ENCODE measurements at regions of chr2 and their contacts with region 1.

Region 1: GRCh38 chr2:28751252-28751955 is at the start of gene PPP1CB:
- DNase-seq: peak; percentile 95 to 99 (median 99)
- ATAC-seq: peak; percentile 92
- H3K4me3 ChIP-seq: peak within 1 kb of the TSS; percentile 97
- H3K4me3 Mint-ChIP-seq: peak within 1 kb of the TSS; percentile 93 to 100 (median 96)
- H3K27ac ChIP-seq: peak within 1 kb of the TSS; percentile 99
- H3K27ac Mint-ChIP-seq: peak within 1 kb of the TSS; percentile 96 to 99 (median 98)
- H3K4me1 ChIP-seq: peaks cover 42 to 44% of the 10 kb centered on the region in 2 donors
- H3K4me1 Mint-ChIP-seq: peaks cover 35 to 67% (median 64%) of the 10 kb centered on the region in 7 donors
- H3K27me3 ChIP-seq: no peaks in the 10 kb centered on the region
- H3K27me3 Mint-ChIP-seq: no peaks in the 10 kb centered on the region
- total RNA-seq, gene PPP1CB: 202 to 223 (median 210) TPM

Region 2: DNA sequence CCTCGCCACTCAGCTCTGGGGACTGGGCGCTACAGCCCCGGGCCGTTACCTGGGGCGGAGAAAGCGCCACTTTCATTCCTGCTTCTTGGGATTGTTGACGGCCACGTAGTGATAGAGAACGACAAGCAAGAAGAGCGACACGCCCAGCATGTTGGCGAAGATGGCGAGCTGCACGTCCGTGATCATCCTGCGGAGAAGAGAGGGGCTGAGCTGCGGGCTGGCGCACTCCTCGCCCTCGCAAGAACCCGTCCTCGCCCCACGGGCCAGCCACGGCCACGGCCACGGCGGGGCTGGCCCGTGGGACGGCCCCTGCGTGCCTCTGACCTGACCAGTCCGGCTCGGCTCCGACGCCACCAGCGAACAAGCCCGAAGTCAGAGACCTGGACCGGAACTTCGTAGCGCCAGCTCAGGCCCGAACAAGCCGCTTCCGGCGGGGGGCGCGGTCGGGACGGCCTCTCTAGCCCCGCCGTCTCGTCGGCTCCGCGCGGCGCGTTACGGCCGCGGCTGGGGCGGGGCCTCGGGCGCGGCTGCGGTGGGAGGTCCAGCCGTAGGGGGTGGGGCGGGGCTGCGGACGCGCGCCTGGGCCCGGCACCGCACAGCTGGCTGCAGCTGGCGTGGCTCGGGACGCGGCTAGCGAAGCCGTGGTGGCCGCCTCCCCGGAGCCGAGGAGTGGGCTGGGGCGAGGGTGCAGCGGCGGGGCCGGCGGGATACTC is 1680.0 kb before region 1 on chr2 and contains the start of gene OST4:
- CTCF ChIA-PET with region 1: no interaction called
- POLR2A ChIA-PET with region 1: no interaction called
- intact Hi-C with region 1: loop called (anchors 5 to 10 kb)
- DNase-seq: peak; percentile 81 to 97 (median 87)
- ATAC-seq: peak; percentile 96
- H3K4me3 ChIP-seq: peak within 1 kb of the TSS; percentile 83
- H3K4me3 Mint-ChIP-seq: peak within 1 kb of the TSS; percentile 96 to 99 (median 97)
- H3K27ac ChIP-seq: peak within 1 kb of the TSS; percentile 97
- H3K27ac Mint-ChIP-seq: peak within 1 kb of the TSS; percentile 93 to 98 (median 97)
- H3K4me1 ChIP-seq: peaks cover 29 to 41% of the 10 kb centered on the region in 2 donors
- H3K4me1 Mint-ChIP-seq: peaks cover 57 to 86% (median 76%) of the 10 kb centered on the region in 7 donors
- H3K27me3 ChIP-seq: no peaks in the 10 kb centered on the region
- H3K27me3 Mint-ChIP-seq: no peaks in the 10 kb centered on the region
- total RNA-seq, gene OST4: 241 to 398 (median 263) TPM

Region 3: DNA sequence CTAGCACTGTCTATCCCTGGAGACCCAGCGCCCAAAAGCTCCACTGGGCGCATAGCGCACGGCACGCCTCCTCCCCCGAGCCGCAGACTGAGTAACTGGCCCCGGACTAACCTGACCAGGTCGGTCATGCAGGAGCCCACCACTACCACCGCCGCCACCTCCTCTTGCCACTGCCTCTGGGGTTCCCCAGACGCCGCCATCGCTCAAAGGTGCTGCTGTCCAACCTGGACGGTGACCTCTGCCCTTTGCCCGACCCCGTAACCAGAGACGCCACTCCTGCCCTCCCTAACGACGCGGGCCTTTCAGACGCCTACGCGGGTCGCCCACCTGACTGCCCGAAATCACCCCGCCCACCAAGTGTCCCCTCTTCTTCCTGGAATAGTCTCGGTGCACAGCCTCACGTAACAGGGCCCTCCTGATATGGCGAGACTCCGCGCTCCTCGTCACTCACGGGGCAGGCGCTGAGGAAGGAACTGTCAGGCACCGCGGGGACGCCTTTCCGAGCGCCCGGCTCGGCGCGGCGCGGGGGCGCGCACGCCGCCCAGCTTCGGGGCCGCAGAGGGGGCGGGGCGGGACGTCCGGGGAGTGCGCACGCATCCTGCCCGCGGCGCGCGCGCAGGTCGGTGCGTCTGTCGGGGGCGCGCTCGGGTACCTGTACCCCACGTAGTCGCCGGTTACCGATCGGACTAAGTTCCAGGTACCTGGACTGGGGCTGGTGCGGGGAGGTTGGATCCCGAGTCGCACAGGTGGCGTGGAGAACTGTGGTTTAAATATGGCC is 861.1 kb before region 1 on chr2 and contains the starts of genes BABAM2 and RBKS:
- CTCF ChIA-PET with region 1: no interaction called
- POLR2A ChIA-PET with region 1: no interaction called
- intact Hi-C with region 1: loop called in 1 of 2 experiments (anchors 2 kb)
- DNase-seq: peak; percentile 90 to 96 (median 94)
- ATAC-seq: peak; percentile 92
- H3K4me3 ChIP-seq: peak within 1 kb of the TSS; percentile 95
- H3K4me3 Mint-ChIP-seq: peak within 1 kb of the TSS; percentile 96 to 100 (median 98)
- H3K27ac ChIP-seq: peak within 1 kb of the TSS; percentile 99
- H3K27ac Mint-ChIP-seq: peak within 1 kb of the TSS; percentile 95 to 100 (median 100)
- H3K4me1 ChIP-seq: peaks cover 27 to 30% of the 10 kb centered on the region in 2 donors
- H3K4me1 Mint-ChIP-seq: peaks cover 28 to 60% (median 55%) of the 10 kb centered on the region in 7 donors
- H3K27me3 ChIP-seq: no peaks in the 10 kb centered on the region
- H3K27me3 Mint-ChIP-seq: peaks cover 0 to 3% (median 0%) of the 10 kb centered on the region in 5 donors
- total RNA-seq, gene BABAM2: 34.2 to 55.8 (median 40.3) TPM
- total RNA-seq, gene RBKS: 1.5 to 10.8 (median 2.0) TPM

Region 4: GRCh38 chr2:28610583-28611201 is 140.7 kb before region 1 on chr2:
- CTCF ChIA-PET with region 1: interaction called, 6 read pairs
- POLR2A ChIA-PET with region 1: interaction called, 34 read pairs
- intact Hi-C with region 1: loop called in 1 of 2 experiments (anchors 1 kb)
- DNase-seq: peak in 1 of 9 donors; percentile 49
- ATAC-seq: no peak
- H3K4me3 ChIP-seq: no peak overlapping the region
- H3K4me3 Mint-ChIP-seq: peak overlapping the region in 1 of 10 donors; percentile 22
- H3K27ac ChIP-seq: no peak overlapping the region
- H3K27ac Mint-ChIP-seq: peak overlapping the region in 7 of 9 donors; percentile 38 to 70 (median 52)
- H3K4me1 ChIP-seq: peaks cover 8 to 34% of the 10 kb centered on the region in 2 donors
- H3K4me1 Mint-ChIP-seq: peaks cover 6 to 43% (median 35%) of the 10 kb centered on the region in 7 donors
- H3K27me3 ChIP-seq: no peaks in the 10 kb centered on the region
- H3K27me3 Mint-ChIP-seq: no peaks in the 10 kb centered on the region

Region 5: DNA sequence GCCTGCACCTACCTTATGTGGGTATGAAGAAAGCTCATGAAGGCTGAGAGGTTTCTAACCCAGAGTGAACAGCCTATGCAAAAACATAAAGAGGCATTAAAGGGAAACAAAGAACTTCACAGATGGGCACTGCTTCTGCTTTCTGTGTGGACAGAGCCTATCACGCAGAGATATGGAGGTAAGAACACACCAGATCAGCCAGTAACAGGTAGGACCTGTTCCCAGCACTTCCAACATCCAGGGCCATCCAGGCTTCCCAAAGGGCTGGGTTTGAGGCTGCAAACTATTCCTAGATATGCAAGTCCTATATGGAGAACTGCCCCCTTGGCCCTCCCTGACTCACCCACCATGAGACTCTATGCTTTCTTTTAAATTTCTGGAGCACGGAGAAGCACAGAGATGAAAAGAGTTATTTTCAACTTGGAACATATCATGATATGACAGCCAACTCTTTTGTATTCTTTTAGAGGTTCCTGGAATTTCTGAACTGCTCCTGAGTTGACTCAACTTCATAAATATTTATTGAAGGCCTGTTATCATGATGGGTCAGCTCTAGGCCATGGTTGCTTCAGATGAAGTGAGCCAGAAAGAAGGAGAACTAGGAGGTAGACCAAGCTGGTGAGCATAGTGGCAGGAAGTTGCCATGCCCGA is 77.2 kb before region 1 on chr2:
- CTCF ChIA-PET with region 1: no interaction called
- POLR2A ChIA-PET with region 1: no interaction called
- intact Hi-C with region 1: no loop called
- DNase-seq: no peak
- ATAC-seq: no peak
- H3K4me3 ChIP-seq: no peak overlapping the region
- H3K4me3 Mint-ChIP-seq: no peak overlapping the region
- H3K27ac ChIP-seq: no peak overlapping the region
- H3K27ac Mint-ChIP-seq: no peak overlapping the region
- H3K4me1 ChIP-seq: no peaks in the 10 kb centered on the region
- H3K4me1 Mint-ChIP-seq: peaks cover 0 to 10% (median 0%) of the 10 kb centered on the region in 7 donors
- H3K27me3 ChIP-seq: no peaks in the 10 kb centered on the region
- H3K27me3 Mint-ChIP-seq: no peaks in the 10 kb centered on the region

Region 6: DNA sequence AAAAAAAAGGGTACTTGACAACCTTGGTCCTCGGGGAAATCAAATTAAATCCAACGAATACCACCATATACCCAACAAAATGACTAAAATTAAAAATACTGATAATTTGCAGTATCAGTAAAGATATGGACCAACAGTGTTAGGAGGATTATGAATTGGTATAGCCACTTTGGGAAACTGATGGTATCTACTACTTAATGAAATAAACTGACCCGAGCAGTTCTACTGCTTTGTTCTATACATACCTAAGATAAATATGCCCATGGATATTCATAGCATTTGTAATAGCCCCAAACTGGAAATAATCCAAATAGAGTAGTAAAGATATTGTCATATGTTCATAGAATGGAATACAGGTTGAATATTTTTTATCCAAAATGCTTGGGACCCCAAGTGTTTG is 20.9 kb after region 1 on chr2:
- CTCF ChIA-PET with region 1: interaction called, 5 read pairs
- POLR2A ChIA-PET with region 1: interaction called, 4 read pairs
- intact Hi-C with region 1: loop called in 1 of 2 experiments (anchors 2 kb)
- DNase-seq: no peak
- ATAC-seq: no peak
- H3K4me3 ChIP-seq: no peak overlapping the region
- H3K4me3 Mint-ChIP-seq: peak overlapping the region in 1 of 10 donors; percentile 48
- H3K27ac ChIP-seq: no peak overlapping the region
- H3K27ac Mint-ChIP-seq: peak overlapping the region in 2 of 9 donors; percentile 15 to 24
- H3K4me1 ChIP-seq: peaks cover 17 to 31% of the 10 kb centered on the region in 2 donors
- H3K4me1 Mint-ChIP-seq: peaks cover 40 to 88% (median 84%) of the 10 kb centered on the region in 7 donors
- H3K27me3 ChIP-seq: no peaks in the 10 kb centered on the region
- H3K27me3 Mint-ChIP-seq: no peaks in the 10 kb centered on the region

Region 7: GRCh38 chr2:28894470-28895177 is 143.2 kb after region 1 on chr2 and contains the start of gene WDR43:
- CTCF ChIA-PET with region 1: no interaction called
- POLR2A ChIA-PET with region 1: interaction called, 3 read pairs
- intact Hi-C with region 1: loop called (anchors 1 kb)
- DNase-seq: peak; percentile 97 to 100 (median 99)
- ATAC-seq: peak; percentile 100
- H3K4me3 ChIP-seq: peak within 1 kb of the TSS; percentile 88
- H3K4me3 Mint-ChIP-seq: peak within 1 kb of the TSS; percentile 91 to 99 (median 98)
- H3K27ac ChIP-seq: peak within 1 kb of the TSS; percentile 78
- H3K27ac Mint-ChIP-seq: peak within 1 kb of the TSS; percentile 91 to 99 (median 94)
- H3K4me1 ChIP-seq: peaks cover 28% of the 10 kb centered on the region in 2 donors
- H3K4me1 Mint-ChIP-seq: peaks cover 31 to 49% (median 43%) of the 10 kb centered on the region in 7 donors
- H3K27me3 ChIP-seq: no peaks in the 10 kb centered on the region
- H3K27me3 Mint-ChIP-seq: peaks cover 0 to 2% (median 0%) of the 10 kb centered on the region in 5 donors
- total RNA-seq, gene WDR43: 49.6 to 75.0 (median 63.9) TPM